Panc1 (cell line): ENCODE measurements at regions of chr5 and their contacts with region 1.

Region 1: GRCh38 chr5:39720136-39720535 is 295.4 kb upstream of the DAB2 start:
- DNase-seq: no peak
- ATAC-seq: no peak
- H3K4me3 ChIP-seq: no peak overlapping the region
- H3K27ac ChIP-seq: no peak overlapping the region
- H3K4me1 ChIP-seq: peaks cover 5% of the 10 kb centered on the region; the same call in 1 of the 2 replicates
- H3K27me3 ChIP-seq: no peaks in the 10 kb centered on the region
- CTCF ChIP-seq: no peak

Region 2: DNA sequence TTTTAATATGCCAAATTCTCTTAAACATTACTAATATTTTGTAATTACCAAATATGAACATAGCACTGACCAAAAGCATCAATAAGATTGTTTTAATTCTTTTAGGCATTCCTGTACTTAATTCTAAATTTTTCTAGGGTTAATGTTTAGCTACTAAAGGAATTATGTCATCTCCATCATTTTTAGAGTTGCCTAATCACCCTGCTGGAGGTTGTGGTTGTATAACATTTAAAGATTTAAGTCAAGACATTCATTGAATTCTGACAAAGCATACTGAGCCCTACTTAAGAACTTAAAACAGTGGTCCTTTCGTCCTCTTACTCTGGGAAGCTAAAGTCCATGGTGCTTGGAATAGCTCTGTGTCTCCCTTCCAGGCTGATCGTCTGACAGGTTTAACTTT is 267.3 kb before region 1 on chr5:
- CTCF ChIA-PET with region 1: no interaction called
- POLR2A ChIA-PET with region 1: no interaction called
- in situ Hi-C with region 1: no loop called
- intact Hi-C with region 1: no loop called
- DNase-seq: no peak
- ATAC-seq: no peak
- H3K4me3 ChIP-seq: no peak overlapping the region
- H3K27ac ChIP-seq: no peak overlapping the region
- H3K4me1 ChIP-seq: no peaks in the 10 kb centered on the region
- H3K27me3 ChIP-seq: peaks cover 10% of the 10 kb centered on the region
- CTCF ChIP-seq: no peak

Region 3: GRCh38 chr5:39494099-39494498 is 226.0 kb before region 1 on chr5:
- CTCF ChIA-PET with region 1: no interaction called
- POLR2A ChIA-PET with region 1: no interaction called
- in situ Hi-C with region 1: no loop called
- intact Hi-C with region 1: no loop called
- DNase-seq: no peak
- ATAC-seq: no peak
- H3K4me3 ChIP-seq: no peak overlapping the region
- H3K27ac ChIP-seq: no peak overlapping the region
- H3K4me1 ChIP-seq: no peaks in the 10 kb centered on the region
- H3K27me3 ChIP-seq: no peaks in the 10 kb centered on the region
- CTCF ChIP-seq: no peak

Region 4: DNA sequence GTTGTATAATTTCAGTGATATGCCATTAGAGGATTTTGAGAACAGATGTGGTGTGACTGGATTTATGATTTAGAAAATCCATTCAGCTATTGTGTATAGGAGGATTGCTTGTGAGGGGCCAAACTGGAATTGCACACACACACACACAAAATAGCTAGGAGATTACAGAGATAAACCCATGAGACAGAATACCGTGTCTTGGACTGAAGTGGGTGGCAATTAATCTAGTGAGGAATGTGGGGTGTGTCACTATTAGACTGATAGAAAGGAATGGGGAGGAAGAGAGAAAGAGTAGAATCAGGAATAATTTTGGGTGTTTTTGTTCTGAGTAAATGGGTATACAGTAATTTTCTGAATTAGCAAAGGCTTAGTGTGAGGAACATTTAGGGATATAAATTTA is 21.0 kb before region 1 on chr5:
- CTCF ChIA-PET with region 1: no interaction called
- POLR2A ChIA-PET with region 1: no interaction called
- in situ Hi-C with region 1: no loop called
- intact Hi-C with region 1: no loop called
- DNase-seq: no peak
- ATAC-seq: no peak
- H3K4me3 ChIP-seq: no peak overlapping the region
- H3K27ac ChIP-seq: no peak overlapping the region
- H3K4me1 ChIP-seq: no peaks in the 10 kb centered on the region
- H3K27me3 ChIP-seq: no peaks in the 10 kb centered on the region
- CTCF ChIP-seq: no peak

Region 5: GRCh38 chr5:39811381-39811780 is 91.2 kb after region 1 on chr5:
- CTCF ChIA-PET with region 1: no interaction called
- POLR2A ChIA-PET with region 1: interaction called, 13 read pairs
- in situ Hi-C with region 1: no loop called
- intact Hi-C with region 1: no loop called
- DNase-seq: no peak
- ATAC-seq: no peak
- H3K4me3 ChIP-seq: no peak overlapping the region
- H3K27ac ChIP-seq: no peak overlapping the region
- H3K4me1 ChIP-seq: no peaks in the 10 kb centered on the region
- H3K27me3 ChIP-seq: no peaks in the 10 kb centered on the region
- CTCF ChIP-seq: no peak